ENCODE measurements at regions of chr12 and their contacts with region 1.

Region 1: GRCh38 chr12:122399592-122400373 is 22.7 kb downstream of the CLIP1 start:
- DNase-seq: peak; percentile 77 to 94
- H3K4me3 ChIP-seq: peak overlapping the region; percentile 25 to 44
- H3K27ac ChIP-seq: peak overlapping the region; percentile 96 to 97
- H3K4me1 ChIP-seq: peaks cover 7 to 19% of the 10 kb centered on the region in 2 donors
- H3K27me3 ChIP-seq: no peaks in the 10 kb centered on the region
- CTCF ChIP-seq: peak; percentile 52 to 78 (median 71)

Region 2: DNA sequence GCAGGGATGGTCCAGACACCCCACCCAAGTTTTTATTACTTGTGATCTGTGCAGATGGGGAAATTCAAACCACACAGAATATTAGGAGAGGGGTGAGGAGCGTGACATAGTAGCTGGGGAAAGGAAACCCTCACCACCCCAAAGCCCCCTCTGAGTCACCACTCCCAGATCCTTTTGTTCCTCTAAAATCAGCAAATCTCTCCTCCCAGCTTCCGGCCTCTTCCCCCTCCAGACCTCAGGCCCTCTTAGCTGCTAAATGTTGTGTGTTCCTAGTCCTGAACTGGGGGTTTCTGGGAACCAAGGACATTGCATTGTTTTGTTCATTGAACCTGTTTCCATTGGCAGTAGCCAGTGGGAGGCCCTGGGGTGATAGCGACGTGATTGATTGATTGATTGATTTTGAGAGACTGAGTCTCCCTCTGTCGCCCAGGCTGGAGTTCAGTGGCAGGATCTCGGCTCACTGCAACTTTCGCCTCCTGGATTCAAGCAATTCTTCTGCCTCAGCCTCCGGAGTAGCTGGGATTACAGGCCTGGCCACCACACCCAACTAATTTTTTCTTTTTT is 779.4 kb before region 1 on chr12:
- intact Hi-C with region 1: no loop called
- DNase-seq: no peak
- H3K4me3 ChIP-seq: no peak overlapping the region
- H3K27ac ChIP-seq: peak overlapping the region; percentile 40 to 58
- H3K4me1 ChIP-seq: peaks cover 0 to 7% of the 10 kb centered on the region in 2 donors
- H3K27me3 ChIP-seq: no peaks in the 10 kb centered on the region
- CTCF ChIP-seq: no peak

Region 3: DNA sequence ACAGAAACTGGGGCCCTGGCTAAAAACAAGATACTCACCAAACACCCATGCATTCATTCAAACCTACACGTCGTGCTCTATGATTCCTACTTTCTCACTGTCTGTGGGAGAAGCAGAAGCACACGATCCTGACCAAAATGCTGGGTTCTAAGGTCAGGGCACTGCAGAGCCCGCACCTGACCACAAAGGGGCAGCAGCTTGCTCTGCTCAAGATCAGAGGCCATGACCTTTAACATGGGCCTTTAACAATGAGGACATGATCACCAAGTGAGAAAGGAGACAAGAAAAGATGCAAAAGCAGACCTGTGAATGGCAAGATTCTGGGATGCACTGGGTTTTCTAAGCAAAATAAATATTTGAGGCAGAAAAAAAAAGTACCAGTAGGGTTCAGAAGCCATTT is 93.4 kb before region 1 on chr12:
- intact Hi-C with region 1: no loop called
- DNase-seq: no peak
- H3K4me3 ChIP-seq: no peak overlapping the region
- H3K27ac ChIP-seq: no peak overlapping the region
- H3K4me1 ChIP-seq: no peaks in the 10 kb centered on the region
- H3K27me3 ChIP-seq: no peaks in the 10 kb centered on the region
- CTCF ChIP-seq: no peak

Region 4: GRCh38 chr12:122374707-122375106 is 25.1 kb before region 1 on chr12:
- intact Hi-C with region 1: loop called (anchors 2 kb)
- DNase-seq: peak in 1 of 2 donors; percentile 71
- H3K4me3 ChIP-seq: no peak overlapping the region
- H3K27ac ChIP-seq: peak overlapping the region; percentile 83 to 90
- H3K4me1 ChIP-seq: peaks cover 4 to 18% of the 10 kb centered on the region in 2 donors
- H3K27me3 ChIP-seq: no peaks in the 10 kb centered on the region
- CTCF ChIP-seq: no peak

Region 5: DNA sequence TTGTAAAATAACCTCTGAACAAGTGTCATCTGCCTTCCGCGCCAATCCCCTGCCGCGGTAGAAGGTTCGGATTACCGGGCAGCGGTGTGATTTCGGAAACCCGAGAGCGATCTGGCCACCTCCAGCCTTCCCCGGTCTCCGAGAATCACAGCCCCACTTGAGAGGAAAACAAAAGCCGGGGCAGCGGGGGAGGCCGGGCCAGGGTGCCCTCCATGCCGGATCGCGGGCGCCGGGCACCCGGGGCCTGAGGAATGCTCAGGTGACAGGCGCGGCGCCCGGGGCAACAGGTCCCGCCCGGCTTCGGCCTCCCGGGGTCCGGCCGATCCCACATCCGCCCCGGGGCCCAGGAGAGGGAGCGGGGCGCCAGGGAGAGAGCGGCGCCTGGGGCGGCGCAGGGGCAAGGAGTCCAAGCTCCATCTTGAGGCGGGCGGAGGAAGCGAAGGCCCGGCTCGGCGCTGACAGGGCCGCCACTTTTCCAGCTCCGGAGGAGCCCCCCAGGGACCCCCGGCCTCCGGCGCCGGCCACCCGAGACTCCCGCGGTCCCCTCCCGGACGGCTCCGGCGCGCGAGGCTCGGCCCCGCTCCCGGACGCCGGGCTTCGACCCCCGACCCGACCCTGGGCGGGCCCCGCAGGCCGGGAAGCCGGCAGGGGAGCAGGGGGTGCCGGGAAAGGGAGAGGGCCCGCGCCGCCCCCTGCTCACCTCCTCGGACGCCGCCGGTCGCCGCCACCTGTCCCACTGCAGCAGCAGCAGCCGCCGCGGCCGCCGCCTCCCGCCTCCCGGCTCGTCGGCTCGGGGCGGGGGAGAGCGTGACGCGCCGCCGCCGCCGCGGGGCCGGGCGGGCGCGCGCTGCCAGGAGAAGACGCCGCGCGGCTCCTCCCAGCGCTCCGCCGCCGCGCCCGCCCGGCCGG is 22.3 kb after region 1 on chr12 and contains the start of gene CLIP1:
- intact Hi-C with region 1: loop called (anchors 1 kb)
- DNase-seq: peak in 1 of 2 donors; percentile 81
- H3K4me3 ChIP-seq: peak within 1 kb of the TSS; percentile 95 to 98
- H3K27ac ChIP-seq: peak within 1 kb of the TSS; percentile 99 to 100
- H3K4me1 ChIP-seq: peaks cover 5 to 19% of the 10 kb centered on the region in 2 donors
- H3K27me3 ChIP-seq: no peaks in the 10 kb centered on the region
- CTCF ChIP-seq: peak; percentile 42 to 53 (median 44)
- total RNA-seq, gene CLIP1: 44.7 TPM

Region 6: GRCh38 chr12:122471324-122472226 is 71.8 kb after region 1 on chr12:
- intact Hi-C with region 1: loop called (anchors 1 kb)
- DNase-seq: no peak
- H3K4me3 ChIP-seq: peak overlapping the region; percentile 28 to 30
- H3K27ac ChIP-seq: peak overlapping the region; percentile 68 to 88
- H3K4me1 ChIP-seq: peaks cover 0 to 13% of the 10 kb centered on the region in 2 donors
- H3K27me3 ChIP-seq: no peaks in the 10 kb centered on the region
- CTCF ChIP-seq: peak; percentile 71 to 80 (median 74)

Measured in ascending aorta (tissue), 2 donors.